ENCODE measurements at regions of chr6 and their contacts with region 1.

Region 1: DNA sequence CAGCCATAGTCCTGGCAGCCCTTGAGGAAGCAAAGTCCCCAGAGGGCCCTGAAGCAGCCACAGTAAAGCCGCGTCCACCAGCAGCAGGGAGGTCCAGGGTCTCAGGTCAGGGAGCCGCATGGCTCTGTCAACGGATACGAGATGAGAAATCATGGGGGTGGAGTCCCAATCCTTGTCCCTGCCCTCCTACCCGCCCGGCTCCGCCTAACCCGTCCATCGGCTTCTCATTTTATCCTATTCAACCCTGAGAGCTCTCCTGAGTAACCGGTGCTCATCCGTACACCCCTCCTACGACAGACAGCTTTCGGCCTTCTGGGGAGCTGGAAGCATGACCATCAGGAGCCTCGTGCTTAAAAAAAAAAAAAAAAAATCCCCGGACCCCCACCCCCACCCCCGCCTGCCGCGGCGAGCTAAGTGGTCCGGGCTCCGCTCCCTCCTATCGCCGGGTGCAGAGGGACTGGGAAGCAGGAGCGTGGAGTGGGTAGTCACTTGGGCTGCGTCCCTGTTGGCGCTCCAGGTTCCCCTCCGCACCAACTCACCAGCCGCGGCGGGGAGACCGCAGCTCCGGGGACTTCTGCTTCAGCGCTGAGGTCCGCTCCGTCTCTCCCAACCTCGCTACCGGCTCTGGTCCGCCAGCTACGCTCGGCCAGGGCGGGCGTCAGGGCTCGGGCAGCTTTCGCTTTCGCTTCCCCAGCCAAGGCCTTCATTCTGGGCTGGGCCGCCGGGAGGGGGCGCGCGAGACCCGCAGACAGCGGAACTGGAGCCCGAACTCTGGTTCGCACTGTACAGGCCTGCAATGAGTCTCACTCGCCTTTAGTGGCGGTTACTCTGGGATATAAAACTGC is at the start of gene TAP2:
- DNase-seq: peak; percentile 90 to 99 (median 97)
- ATAC-seq: peak; percentile 92 to 93 (median 92)
- H3K4me3 ChIP-seq: peak within 1 kb of the TSS; percentile 82 to 89
- H3K4me3 Mint-ChIP-seq: peak within 1 kb of the TSS; percentile 72 to 92 (median 84)
- H3K27ac ChIP-seq: peak within 1 kb of the TSS; percentile 100
- H3K27ac Mint-ChIP-seq: peak within 1 kb of the TSS; percentile 100
- H3K4me1 ChIP-seq: peaks cover 38 to 67% of the 10 kb centered on the region in 2 experiments
- H3K4me1 Mint-ChIP-seq: peaks cover 68 to 90% (median 88%) of the 10 kb centered on the region in 3 donors
- H3K27me3 ChIP-seq: no peaks in the 10 kb centered on the region
- H3K27me3 Mint-ChIP-seq: no peaks in the 10 kb centered on the region
- total RNA-seq, gene TAP2: 116 to 147 (median 140) TPM

Region 2: DNA sequence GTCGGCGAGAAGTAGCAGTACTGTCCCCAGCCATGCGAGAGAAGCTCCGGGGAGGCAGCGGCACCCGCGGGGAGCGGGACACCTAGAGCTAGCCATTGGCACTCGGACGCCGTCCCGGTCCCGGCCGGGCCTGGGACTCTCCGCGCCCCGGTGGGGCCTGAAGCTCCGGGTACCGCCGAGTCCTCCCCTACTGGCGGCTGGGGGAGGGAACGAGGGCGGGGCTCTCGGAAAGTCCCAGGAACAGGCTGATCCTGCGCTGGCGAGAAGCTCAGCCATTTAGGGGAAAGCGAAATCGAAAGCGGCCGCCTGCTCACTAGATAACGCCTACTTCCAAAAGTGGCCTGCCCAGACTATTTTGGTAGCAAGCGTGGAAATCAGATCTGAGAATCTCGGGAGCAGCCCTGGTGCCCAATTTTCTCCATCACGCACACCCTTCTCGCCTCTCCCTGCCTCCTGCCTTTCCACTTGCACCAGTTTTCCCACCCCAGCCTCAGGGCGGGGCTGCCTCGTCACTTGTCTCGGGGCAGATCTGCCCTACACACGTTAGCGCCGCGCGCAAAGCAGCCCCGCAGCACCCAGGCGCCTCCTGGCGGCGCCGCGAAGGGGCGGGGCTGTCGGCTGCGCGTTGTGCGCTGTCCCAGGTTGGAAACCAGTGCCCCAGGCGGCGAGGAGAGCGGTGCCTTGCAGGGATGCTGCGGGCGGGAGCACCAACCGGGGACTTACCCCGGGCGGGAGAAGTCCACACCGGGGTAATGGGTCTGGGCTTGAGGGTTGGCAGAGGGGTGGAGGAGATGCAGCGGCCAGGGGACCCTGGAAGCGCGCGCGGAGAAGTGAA is 15.4 kb after region 1 on chr6 and contains the starts of genes PSMB9 and TAP1:
- CTCF ChIA-PET with region 1: interaction called, 18 to 236 read pairs
- POLR2A ChIA-PET with region 1: interaction called, 5 to 23 read pairs
- DNase-seq: peak; percentile 86 to 98 (median 95)
- ATAC-seq: peak; percentile 82 to 87 (median 85)
- H3K4me3 ChIP-seq: peak within 1 kb of the TSS; percentile 85 to 95
- H3K4me3 Mint-ChIP-seq: peak within 1 kb of the TSS; percentile 98 to 99 (median 98)
- H3K27ac ChIP-seq: peak within 1 kb of the TSS; percentile 99
- H3K27ac Mint-ChIP-seq: peak within 1 kb of the TSS; percentile 99 to 100
- H3K4me1 ChIP-seq: peaks cover 34 to 68% of the 10 kb centered on the region in 2 experiments
- H3K4me1 Mint-ChIP-seq: peaks cover 70 to 88% (median 73%) of the 10 kb centered on the region in 3 donors
- H3K27me3 ChIP-seq: no peaks in the 10 kb centered on the region
- H3K27me3 Mint-ChIP-seq: no peaks in the 10 kb centered on the region
- total RNA-seq, gene PSMB9: 110 to 173 (median 134) TPM
- total RNA-seq, gene TAP1: 117 to 163 (median 147) TPM

Region 3: DNA sequence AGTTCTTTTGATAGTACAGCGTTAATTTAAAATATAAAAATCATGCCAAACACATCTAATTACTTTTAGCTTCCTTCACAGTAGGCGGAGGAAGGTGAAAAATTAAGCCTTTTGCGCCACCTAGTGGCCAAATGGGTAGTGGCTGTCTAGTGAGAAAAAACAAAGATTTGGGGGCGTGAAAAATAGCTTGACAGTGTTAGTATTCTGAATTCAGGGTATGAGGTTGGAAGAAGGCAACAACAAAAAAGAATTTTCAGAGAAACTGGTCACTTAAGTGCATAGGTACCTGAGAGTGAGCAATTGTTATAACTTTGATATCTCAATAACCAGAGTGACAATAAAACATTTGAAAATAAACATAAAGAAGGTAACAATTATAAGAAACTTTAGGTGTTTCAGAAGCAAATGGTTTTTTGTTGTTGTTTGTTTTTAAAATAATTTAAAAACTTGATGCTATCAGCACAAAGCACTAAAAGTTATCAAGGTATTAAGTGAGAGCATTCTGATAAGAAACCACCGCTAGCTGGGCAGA is 30.0 kb after region 1 on chr6:
- CTCF ChIA-PET with region 1: interaction called, 29 to 207 read pairs
- POLR2A ChIA-PET with region 1: interaction called, 7 to 29 read pairs
- DNase-seq: peak; percentile 64 to 95 (median 83)
- ATAC-seq: peak; percentile 73 to 81 (median 76)
- H3K4me3 ChIP-seq: no peak overlapping the region
- H3K4me3 Mint-ChIP-seq: no peak overlapping the region
- H3K27ac ChIP-seq: no peak overlapping the region
- H3K27ac Mint-ChIP-seq: peak overlapping the region in 1 of 2 donors; percentile 4
- H3K4me1 ChIP-seq: peaks cover 13 to 16% of the 10 kb centered on the region in 2 experiments
- H3K4me1 Mint-ChIP-seq: peaks cover 25 to 35% (median 34%) of the 10 kb centered on the region in 3 donors
- H3K27me3 ChIP-seq: no peaks in the 10 kb centered on the region
- H3K27me3 Mint-ChIP-seq: no peaks in the 10 kb centered on the region

Region 4: DNA sequence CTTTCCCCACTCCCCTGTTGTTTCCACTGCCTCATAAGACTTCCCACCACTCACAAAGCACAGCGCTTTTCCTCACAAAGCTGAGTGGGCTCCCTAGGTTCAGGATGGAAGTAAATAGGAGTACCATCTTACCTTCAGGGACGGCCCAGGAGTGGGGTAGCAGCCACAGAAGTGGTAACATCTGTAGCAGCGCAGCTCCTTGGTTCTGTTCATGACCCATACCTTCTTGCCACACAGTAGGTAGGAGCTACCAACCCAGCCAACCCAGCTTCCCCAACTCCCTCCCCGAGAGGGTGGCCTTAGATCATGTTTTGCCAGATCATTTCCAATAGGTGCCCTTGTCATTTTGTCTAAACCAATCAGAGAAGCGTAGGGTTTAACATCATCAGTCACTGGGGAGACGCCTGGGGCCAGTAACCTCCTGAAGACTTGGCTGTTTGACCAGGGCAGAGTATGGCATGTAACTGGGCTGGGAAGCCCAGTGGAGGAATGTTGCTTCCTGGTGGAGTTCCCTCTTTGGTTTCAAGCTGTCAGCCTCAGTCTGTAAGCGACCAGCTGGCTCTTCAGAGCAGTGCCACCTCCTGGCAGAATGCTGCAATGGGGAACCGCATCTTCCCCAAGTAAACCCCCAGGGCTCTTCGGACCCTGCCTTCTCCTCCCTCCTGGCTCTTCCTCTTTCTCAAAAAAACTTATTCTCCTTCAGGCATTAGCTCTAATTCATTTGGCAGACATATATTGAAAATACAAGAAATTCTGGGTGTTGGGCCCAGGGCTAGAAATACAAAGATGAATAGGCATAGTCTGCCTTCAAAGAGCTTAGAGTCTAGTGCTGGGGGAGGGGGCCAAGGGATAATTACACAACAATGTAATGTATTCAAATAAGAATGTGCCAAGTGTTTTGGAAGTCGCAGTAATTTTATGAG is 114.7 kb after region 1 on chr6 and contains the start of gene HLA-DMA:
- CTCF ChIA-PET with region 1: interaction called in 1 of 2 experiments, 11 read pairs
- POLR2A ChIA-PET with region 1: interaction called in 1 of 2 experiments, 4 read pairs
- DNase-seq: peak; percentile 57 to 89 (median 73)
- ATAC-seq: peak; percentile 97 to 99 (median 98)
- H3K4me3 ChIP-seq: peak within 1 kb of the TSS; percentile 38 to 65
- H3K4me3 Mint-ChIP-seq: peak within 1 kb of the TSS; percentile 66 to 82 (median 82)
- H3K27ac ChIP-seq: peak within 1 kb of the TSS; percentile 35
- H3K27ac Mint-ChIP-seq: peak within 1 kb of the TSS; percentile 83 to 91
- H3K4me1 ChIP-seq: peaks cover 9 to 41% of the 10 kb centered on the region in 2 experiments
- H3K4me1 Mint-ChIP-seq: peaks cover 41 to 59% (median 43%) of the 10 kb centered on the region in 3 donors
- H3K27me3 ChIP-seq: no peaks in the 10 kb centered on the region
- H3K27me3 Mint-ChIP-seq: no peaks in the 10 kb centered on the region
- total RNA-seq, gene HLA-DMA: 22.3 to 37.8 (median 27.5) TPM